ENCODE measurements at regions of chr6 and their contacts with region 1.

Region 1: DNA sequence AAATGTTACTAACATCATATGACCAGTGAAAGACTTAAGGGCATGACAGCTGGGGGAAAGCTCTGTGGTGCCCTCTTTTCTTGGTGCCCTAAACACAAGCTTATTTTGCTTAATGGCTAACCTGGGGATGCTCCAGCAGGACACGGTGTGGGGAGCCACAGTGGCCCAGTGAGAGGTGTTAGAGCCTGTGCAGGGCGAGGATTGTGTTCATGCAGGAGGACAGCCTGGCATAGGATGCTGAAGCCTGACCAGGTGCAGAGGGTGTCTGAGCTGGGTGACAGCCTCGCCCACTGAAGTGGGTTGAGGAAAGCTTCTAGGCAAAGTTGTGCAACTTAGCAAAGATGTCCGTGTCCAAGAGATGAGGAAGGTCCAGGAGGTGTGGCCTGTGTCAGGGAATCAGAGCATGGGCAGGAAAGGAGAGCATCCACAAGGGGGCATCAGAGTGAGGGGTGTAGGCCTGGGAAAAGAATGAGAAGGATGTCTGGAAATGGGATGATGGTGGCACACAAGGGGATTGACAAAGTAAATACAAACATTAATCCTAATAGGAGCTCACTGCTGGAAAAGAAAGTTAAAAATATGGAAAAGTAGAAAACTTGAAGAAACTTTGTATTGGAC is 33.9 kb downstream of the SLC17A4 start:
- DNase-seq: peak in 29 of 35 experiments; percentile 4 to 63 (median 23)
- ATAC-seq: peak in 3 of 4 experiments; percentile 23 to 52 (median 47)
- H3K4me3 ChIP-seq: no peak overlapping the region
- H3K4me3 Mint-ChIP-seq: no peak overlapping the region
- H3K27ac ChIP-seq: no peak overlapping the region
- H3K27ac Mint-ChIP-seq: no peak overlapping the region
- H3K4me1 ChIP-seq: no peaks in the 10 kb centered on the region
- H3K4me1 Mint-ChIP-seq: peaks cover 0 to 4% (median 0%) of the 10 kb centered on the region in 3 donors
- H3K27me3 ChIP-seq: peaks cover 0 to 3% of the 10 kb centered on the region in 2 experiments
- H3K27me3 Mint-ChIP-seq: peaks cover 0 to under 1% of the 10 kb centered on the region in 2 donors

Region 2: DNA sequence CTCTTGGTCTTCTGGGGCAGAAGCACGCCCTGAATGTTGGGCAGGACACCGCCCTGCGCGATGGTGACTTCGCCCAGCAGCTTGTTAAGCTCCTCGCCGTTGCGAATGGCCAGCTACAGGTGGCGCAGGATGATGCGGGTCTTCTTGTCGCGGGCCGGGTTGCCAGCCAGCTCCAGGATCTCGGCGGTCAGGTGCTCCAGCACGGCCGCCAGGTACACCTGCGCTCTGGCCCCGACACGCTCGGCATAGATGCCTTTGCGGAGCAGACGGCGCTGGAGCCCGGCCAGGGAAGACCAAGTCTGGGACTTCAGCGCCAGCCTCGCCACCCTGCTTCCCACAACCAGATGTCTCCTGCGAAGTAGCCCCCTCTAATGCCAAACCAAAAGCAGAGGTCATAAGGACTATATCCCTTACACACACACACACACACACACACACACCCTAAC is 93.7 kb after region 1 on chr6:
- CTCF ChIA-PET with region 1: interaction called, 5 to 18 read pairs
- POLR2A ChIA-PET with region 1: no interaction called
- DNase-seq: peak in 32 of 35 experiments; percentile 3 to 56 (median 42)
- ATAC-seq: peak; percentile 67 to 92 (median 81)
- H3K4me3 ChIP-seq: peak overlapping the region; percentile 17 to 57
- H3K4me3 Mint-ChIP-seq: peak overlapping the region; percentile 79 to 83 (median 82)
- H3K27ac ChIP-seq: peak overlapping the region; percentile 63
- H3K27ac Mint-ChIP-seq: peak overlapping the region; percentile 82 to 84
- H3K4me1 ChIP-seq: no peaks in the 10 kb centered on the region
- H3K4me1 Mint-ChIP-seq: peaks cover 2 to 9% (median 7%) of the 10 kb centered on the region in 3 donors
- H3K27me3 ChIP-seq: no peaks in the 10 kb centered on the region
- H3K27me3 Mint-ChIP-seq: peaks cover 0 to 1% of the 10 kb centered on the region in 2 donors

Measured in T-cell (primary cell).